Ascending aorta (tissue), 2 donors: ENCODE measurements at regions of chr7 and their contacts with region 1.

Region 1: GRCh38 chr7:135211179-135211945 is at the start of gene WDR91:
- DNase-seq: peak; percentile 89 to 98
- H3K4me3 ChIP-seq: peak within 1 kb of the TSS; percentile 77 to 87
- H3K27ac ChIP-seq: peak within 1 kb of the TSS; percentile 93 to 94
- H3K4me1 ChIP-seq: peaks cover 0 to 19% of the 10 kb centered on the region in 2 donors
- H3K27me3 ChIP-seq: no peaks in the 10 kb centered on the region
- CTCF ChIP-seq: no peak
- total RNA-seq, gene WDR91: 66.7 TPM

Region 2: GRCh38 chr7:134432296-134433152 is 778.8 kb before region 1 on chr7:
- intact Hi-C with region 1: loop called (anchors 5 kb)
- DNase-seq: peak; percentile 65 to 93
- H3K4me3 ChIP-seq: peak overlapping the region; percentile 32 to 61
- H3K27ac ChIP-seq: peak overlapping the region; percentile 63 to 81
- H3K4me1 ChIP-seq: no peaks in the 10 kb centered on the region
- H3K27me3 ChIP-seq: no peaks in the 10 kb centered on the region
- CTCF ChIP-seq: peak; percentile 56 to 89 (median 71)

Region 3: DNA sequence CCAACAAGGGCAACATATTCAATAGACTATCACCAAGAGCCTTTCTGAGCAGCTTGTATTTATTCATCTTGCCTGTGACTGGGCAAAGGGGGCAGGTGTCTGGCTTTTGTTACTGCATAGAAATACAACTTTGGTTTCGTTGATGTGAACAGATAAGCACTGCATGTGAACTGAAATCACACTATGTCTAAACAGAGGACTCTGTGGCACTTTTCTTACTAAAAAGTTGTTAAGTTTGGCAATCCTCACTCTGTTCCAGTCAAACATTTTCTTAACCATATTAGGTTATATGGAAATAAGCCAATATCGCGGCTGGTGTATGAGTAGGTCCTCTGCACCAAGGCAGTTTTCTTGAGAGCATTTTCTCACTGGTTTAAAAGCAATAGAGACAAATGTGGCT is 383.5 kb before region 1 on chr7:
- intact Hi-C with region 1: no loop called
- DNase-seq: peak in 1 of 2 donors; percentile 77
- H3K4me3 ChIP-seq: peak overlapping the region in 1 of 2 donors; percentile 14
- H3K27ac ChIP-seq: peak overlapping the region; percentile 89
- H3K4me1 ChIP-seq: peaks cover 12 to 79% of the 10 kb centered on the region in 2 donors
- H3K27me3 ChIP-seq: no peaks in the 10 kb centered on the region
- CTCF ChIP-seq: no peak

Region 4: DNA sequence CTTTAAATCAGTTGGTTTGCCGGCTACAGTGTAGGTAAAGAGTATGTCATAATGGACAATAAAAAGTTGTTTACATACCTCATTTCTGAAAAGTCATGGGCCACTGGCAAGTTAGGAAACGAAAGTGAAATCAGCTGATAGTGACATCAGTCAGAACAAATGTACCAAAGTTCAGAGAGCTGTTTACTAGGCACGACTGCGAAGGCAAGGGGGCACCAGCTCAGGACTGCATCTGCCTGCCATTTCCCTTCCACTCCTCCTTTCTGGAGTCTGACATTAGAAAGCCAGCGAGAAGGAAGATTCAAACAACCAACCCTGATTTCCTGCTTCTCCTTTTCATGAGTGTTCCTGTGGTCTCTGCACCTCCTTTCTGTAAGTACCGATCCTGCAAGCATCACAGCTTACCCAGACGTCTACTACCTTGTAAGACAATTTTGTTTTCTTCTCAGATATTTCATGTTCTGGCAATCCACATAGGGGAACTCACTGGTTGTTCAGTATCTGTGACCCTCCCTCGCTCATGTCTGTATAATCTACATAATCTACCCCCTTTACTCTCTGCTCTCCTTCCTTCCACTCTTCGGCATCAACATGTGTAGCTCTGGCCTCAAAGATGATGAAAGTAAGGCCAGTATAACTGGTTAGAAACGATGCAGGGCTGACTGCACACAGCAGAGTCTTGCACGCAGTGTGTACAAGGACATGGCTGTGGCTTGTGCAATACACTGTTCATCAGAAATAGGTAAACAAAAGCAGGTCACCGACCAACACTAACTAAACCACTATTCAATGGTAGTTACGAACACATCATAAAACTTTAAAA is 63.3 kb before region 1 on chr7 and contains the start of gene TMEM140:
- intact Hi-C with region 1: loop called (anchors 2 kb)
- DNase-seq: no peak
- H3K4me3 ChIP-seq: peak within 1 kb of the TSS; percentile 63 to 65
- H3K27ac ChIP-seq: peak within 1 kb of the TSS; percentile 94
- H3K4me1 ChIP-seq: peaks cover 4 to 24% of the 10 kb centered on the region in 2 donors
- H3K27me3 ChIP-seq: no peaks in the 10 kb centered on the region
- CTCF ChIP-seq: peak in 1 of 3 experiments; percentile 7
- total RNA-seq, gene TMEM140: 26.9 TPM

Region 5: DNA sequence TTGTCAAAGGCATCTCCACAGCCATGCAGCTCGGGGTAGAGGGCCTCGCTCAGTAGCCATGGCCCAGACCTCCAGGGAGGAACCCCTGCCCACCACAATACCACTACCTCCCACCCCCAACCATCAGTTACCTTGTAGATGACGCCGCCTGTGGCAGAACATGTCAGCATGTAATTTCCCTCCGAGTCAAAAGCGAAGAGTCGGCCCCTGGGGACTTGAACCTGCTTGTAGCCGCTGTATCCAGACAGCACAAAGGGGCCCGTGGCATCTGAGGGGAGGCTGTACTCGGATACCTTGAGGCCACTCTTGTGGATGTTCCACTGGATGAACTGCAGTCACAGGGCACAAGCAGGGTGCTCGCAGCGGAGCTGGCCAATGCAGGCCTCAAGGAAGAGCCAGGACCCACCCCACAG is 24.5 kb before region 1 on chr7:
- intact Hi-C with region 1: no loop called
- DNase-seq: peak in 1 of 2 donors; percentile 60
- H3K4me3 ChIP-seq: no peak overlapping the region
- H3K27ac ChIP-seq: no peak overlapping the region
- H3K4me1 ChIP-seq: no peaks in the 10 kb centered on the region
- H3K27me3 ChIP-seq: no peaks in the 10 kb centered on the region
- CTCF ChIP-seq: no peak

Region 6: GRCh38 chr7:135253898-135254771 is 42.8 kb after region 1 on chr7:
- intact Hi-C with region 1: loop called (anchors 2 kb)
- DNase-seq: peak; percentile 65 to 92
- H3K4me3 ChIP-seq: peak overlapping the region in 1 of 2 donors; percentile 2
- H3K27ac ChIP-seq: peak overlapping the region; percentile 83 to 84
- H3K4me1 ChIP-seq: peaks cover 11 to 20% of the 10 kb centered on the region in 2 donors
- H3K27me3 ChIP-seq: no peaks in the 10 kb centered on the region
- CTCF ChIP-seq: no peak

Region 7: GRCh38 chr7:135558337-135558767 is 347.0 kb after region 1 on chr7:
- intact Hi-C with region 1: loop called (anchors 2 kb)
- DNase-seq: peak in 1 of 2 donors; percentile 76
- H3K4me3 ChIP-seq: peak overlapping the region; percentile 65 to 91
- H3K27ac ChIP-seq: peak overlapping the region; percentile 90 to 91
- H3K4me1 ChIP-seq: peaks cover 0 to 7% of the 10 kb centered on the region in 2 donors
- H3K27me3 ChIP-seq: no peaks in the 10 kb centered on the region
- CTCF ChIP-seq: peak; percentile 36 to 57 (median 45)

Region 8: DNA sequence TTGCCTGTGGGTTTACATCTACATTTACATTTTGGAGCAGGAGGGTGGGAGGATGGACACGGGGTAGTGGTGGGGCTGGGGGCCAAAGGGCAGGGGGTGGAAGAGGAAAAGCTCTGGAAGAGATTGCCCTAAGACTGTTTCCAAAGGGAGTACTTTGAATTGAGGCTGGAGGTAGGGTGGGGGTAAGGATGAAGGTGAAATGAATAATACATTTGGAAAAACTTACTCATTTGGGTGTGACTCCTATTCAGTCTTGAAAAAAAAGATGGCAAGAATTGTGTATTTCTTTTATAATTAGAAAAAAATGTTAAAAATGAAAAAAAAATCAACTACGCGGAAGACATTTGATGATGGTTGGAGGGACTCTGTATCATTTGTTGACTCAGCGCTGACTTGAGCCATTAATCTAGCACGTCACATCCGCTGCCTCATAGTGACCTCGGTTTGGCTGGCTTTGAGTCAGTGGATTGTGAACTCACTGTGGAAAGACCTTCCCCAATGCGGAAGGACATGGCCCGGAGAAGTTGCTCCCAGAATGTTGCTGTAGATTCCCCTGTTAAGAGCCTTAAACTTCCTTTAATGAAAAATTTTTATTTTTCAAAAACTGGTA is 534.4 kb after region 1 on chr7:
- intact Hi-C with region 1: loop called (anchors 5 kb)
- DNase-seq: peak; percentile 75 to 96
- H3K4me3 ChIP-seq: peak overlapping the region; percentile 16 to 62
- H3K27ac ChIP-seq: peak overlapping the region; percentile 94
- H3K4me1 ChIP-seq: peaks cover 23 to 45% of the 10 kb centered on the region in 2 donors
- H3K27me3 ChIP-seq: no peaks in the 10 kb centered on the region
- CTCF ChIP-seq: no peak